ENCODE measurements at regions of chr16 and their contacts with region 1.

Region 1: DNA sequence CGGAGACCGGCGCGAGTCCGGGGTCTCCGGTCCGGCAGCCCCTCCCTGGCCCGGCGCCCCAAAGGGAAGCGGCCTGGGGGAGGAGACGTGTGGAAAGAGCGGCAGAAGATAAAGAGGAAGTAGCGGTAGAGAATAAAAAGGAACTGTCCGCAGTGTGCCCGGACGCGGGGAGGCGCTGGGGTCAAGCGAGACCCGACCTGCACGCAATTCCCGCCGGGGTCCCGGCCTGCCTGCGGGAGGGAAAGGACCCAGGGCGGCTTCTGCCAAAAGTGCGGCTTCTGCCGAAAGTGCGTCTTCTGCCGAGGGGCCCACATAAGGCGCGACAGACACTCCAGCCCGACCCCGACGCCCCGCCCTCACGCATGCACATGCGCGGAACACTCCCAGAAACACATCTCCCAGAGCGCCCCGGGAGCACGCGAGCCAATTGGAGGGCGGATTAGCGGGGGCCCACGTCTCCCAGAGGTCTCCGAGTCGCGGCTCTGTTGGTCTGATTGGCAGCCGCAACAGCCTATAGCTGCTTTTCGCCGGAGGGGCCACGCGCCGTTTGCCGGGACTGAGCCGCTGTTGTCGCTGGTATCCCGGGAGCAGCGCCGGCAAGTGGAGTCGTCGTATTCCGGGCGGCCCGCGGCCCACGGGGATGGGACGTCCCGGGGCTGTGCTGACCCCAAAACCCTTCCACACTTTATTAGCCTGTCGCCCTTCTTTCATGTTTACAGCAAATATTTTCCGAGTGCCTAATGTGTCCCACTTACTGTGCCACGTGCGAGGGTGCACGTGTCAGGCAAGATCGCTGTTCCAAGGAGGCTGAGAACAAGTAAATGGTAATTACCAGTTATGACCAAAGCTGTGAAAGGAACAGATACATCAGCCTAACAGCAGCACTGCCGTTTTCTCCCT is 8.0 kb upstream of the MEFV start:
- DNase-seq: peak; percentile 98
- H3K4me3 Mint-ChIP-seq: peak overlapping the region; percentile 85
- H3K27ac Mint-ChIP-seq: peak overlapping the region; percentile 94
- H3K4me1 Mint-ChIP-seq: peaks cover 15% of the 10 kb centered on the region
- H3K27me3 Mint-ChIP-seq: no peaks in the 10 kb centered on the region

Region 2: GRCh38 chr16:3214904-3215600 is 49.3 kb before region 1 on chr16:
- intact Hi-C with region 1: loop called (anchors 10 kb)
- DNase-seq: peak; percentile 84
- H3K4me3 Mint-ChIP-seq: peak overlapping the region; percentile 65
- H3K27ac Mint-ChIP-seq: peak overlapping the region; percentile 91
- H3K4me1 Mint-ChIP-seq: peaks cover 26% of the 10 kb centered on the region
- H3K27me3 Mint-ChIP-seq: no peaks in the 10 kb centered on the region

Region 3: DNA sequence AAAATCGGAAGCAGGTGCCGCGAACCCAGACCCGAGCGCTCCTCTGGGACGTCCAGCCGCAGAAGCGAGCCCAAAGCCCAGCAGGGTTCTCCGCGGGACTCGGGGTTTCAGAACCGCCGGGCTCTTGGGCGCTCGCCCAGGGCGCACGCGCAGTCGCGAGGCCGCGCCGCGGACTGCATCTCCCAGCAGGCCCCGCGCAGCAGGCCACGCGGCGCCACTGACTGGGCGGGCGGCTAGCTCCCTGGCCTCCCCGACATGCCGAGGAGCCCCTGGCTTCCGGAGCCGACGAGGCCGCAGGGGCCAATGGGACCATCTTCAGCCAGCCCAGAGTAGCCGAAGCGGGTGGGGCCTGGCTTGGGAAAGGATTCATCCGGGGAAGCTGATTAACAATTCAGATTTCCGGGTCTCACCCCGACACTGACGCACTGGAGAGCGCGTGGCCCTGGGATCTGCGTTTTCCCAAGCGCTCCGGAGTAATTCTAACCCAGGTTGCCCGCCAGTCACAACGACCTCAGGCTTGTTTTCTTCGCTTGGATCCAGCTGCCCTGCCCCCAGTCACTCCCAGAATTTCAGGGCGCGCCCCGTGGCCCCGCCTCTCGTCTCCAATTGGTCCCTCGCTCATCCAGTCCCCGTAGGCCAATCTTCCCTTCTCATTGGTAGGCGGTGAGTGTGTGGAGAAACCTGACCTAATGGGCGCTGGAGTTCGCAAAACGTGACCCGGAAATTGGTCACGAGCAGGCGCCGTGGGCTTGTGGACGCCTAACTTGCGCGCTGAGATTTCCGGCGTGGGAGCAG is 18.5 kb after region 1 on chr16 and contains the start of gene ZNF263:
- intact Hi-C with region 1: loop called (anchors 1 kb)
- DNase-seq: peak; percentile 98
- H3K4me3 Mint-ChIP-seq: peak within 1 kb of the TSS; percentile 88
- H3K27ac Mint-ChIP-seq: peak within 1 kb of the TSS; percentile 98
- H3K4me1 Mint-ChIP-seq: peaks cover 18% of the 10 kb centered on the region
- H3K27me3 Mint-ChIP-seq: peaks cover 4% of the 10 kb centered on the region
- total RNA-seq, gene ZNF263: 27.0 and 31.3 TPM in 2 replicates

Region 4: DNA sequence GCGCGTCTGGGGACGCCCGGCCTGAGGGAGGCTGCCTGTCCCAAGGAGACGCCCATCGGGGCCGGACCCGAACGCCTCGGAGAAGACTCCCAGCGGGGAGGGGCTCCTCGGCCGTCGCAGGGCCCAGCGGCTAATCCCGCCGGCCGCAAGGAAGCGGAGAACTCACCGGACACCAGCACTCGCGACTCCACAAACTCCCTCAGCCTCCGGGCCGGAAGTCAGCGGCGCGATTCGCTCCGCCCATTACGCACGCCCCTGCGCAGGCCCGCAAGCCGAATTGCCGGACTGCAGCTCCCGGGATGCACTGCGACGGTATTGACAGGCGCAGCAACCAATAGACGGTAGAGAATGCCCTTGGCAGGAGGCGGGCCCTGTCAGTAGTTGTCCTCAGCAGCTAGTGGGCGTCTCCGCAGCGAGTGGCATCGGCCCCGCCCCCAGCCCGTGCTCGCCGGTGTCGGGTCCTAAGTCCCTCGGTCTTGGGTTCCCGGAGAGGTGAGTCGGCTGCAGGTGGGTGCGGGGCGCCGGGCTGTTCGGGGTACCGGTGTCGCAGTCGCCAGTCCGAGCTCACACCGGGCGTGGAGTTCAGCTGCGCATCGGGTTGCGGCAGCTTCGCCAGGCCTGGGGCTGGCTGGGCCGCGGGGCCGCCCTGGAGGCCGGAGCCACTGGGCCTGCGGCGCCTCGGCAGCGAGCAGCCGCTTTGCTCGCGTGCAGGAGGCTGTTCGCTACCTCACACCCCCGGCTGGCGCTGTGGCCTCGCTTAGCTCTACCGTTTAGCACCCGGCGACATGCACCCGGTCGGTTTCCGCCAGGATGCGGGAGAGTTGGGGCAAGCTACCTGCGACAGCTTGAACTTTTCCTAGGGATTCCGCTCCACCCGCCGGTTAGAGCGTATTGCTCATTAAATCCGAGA is 136.6 kb after region 1 on chr16 and contains the starts of genes ZNF174 and ZSCAN32:
- intact Hi-C with region 1: loop called (anchors 1 kb)
- DNase-seq: peak; percentile 100
- H3K4me3 Mint-ChIP-seq: peak within 1 kb of the TSS; percentile 90
- H3K27ac Mint-ChIP-seq: peak within 1 kb of the TSS; percentile 86
- H3K4me1 Mint-ChIP-seq: peaks cover 20% of the 10 kb centered on the region
- H3K27me3 Mint-ChIP-seq: no peaks in the 10 kb centered on the region
- total RNA-seq, gene ZNF174: 10.1 and 11.4 TPM in 2 replicates
- total RNA-seq, gene ZSCAN32: 16.8 and 17.9 TPM in 2 replicates

Region 5: DNA sequence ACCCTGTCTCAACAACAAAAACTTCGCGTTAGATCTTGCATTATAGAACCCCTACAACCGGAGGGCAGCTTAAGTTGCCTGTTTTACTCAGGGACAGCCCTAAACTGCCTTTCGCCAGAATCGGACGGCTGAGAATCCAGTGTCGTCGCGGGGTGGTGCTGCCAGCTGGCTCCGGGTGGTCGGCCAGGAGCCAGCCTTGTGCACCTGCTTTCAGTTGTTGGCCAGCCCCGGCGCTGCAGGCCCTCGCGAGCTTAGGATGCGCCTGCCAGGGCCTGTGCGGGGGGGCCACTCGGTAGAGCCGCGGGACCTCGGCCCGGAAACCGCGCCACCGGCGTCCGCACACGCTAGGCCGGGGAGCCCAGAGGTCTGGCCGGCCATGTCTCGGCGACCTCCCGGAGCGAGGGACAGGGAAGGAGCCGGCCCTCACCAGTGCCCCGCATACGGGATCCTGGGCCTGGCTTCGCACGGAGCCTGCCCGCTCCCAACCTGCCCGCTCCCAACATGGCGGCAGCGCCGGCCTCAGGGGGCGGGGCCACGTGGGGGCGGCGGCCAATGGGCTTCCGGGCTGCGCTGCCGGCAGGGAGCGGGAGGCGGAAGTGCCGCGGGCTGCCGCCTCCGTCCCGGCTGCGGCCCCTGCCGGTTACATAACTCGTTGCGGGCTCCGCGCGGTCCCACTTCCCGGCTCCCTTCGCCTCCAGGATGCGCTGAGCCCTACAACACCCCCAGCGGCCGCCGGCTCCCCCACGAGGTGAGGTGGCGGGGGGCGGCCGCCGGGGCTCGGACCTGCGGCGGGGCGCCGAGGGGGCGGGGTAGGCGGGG is 193.3 kb after region 1 on chr16:
- intact Hi-C with region 1: loop called (anchors 1 kb)
- DNase-seq: peak; percentile 97
- H3K4me3 Mint-ChIP-seq: peak overlapping the region; percentile 85
- H3K27ac Mint-ChIP-seq: peak overlapping the region; percentile 84
- H3K4me1 Mint-ChIP-seq: peaks cover 39% of the 10 kb centered on the region
- H3K27me3 Mint-ChIP-seq: no peaks in the 10 kb centered on the region